Endothelial cell of umbilical vein (primary cell): ENCODE measurements at regions of chr7 and their contacts with region 1.

Region 1: DNA sequence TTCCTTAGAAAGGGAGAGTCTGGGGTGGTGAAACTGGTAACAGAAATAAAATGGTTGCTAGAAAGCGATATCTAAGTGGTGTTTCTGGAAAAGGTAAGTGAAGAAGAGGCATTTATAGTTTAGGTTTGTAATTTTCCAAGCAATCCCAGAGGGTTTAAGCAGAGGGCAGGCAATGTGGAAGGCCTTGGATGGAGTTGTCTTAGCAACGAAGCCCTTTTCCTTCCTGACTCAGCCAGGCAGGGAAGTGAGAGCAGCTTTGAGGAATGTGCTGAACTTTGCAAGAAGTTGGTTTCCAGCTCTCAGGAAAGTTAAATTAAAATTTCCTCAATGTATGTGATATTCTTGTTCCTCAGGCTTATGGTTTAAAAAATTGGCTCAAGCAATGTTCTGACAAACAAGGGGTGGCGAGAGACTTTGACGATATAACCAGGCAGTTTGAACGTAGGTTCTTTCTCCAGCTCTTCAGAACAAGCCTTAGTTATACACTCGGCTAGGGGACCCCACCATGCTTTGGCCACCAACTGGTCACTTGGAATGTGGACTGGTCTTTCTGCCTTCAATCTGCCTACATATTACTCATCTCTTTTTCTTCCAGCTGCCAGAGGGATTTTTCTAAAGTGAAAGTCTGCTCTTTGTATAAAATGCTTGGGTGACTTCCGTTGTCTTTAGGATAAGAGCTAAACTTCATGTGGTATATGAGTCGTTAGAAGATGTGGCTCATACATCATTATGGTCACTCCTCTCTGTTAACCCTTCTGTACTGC is 66.9 kb upstream of the SLC25A13 start:
- DNase-seq: peak; percentile 89
- H3K4me3 ChIP-seq: peak overlapping the region in 1 of 3 experiments; percentile 38
- H3K27ac ChIP-seq: peak overlapping the region; percentile 97
- H3K4me1 ChIP-seq: peaks cover 26% of the 10 kb centered on the region
- H3K27me3 ChIP-seq: no peaks in the 10 kb centered on the region
- CTCF ChIP-seq: no peak
- POLR2A ChIP-seq: peak; percentile 18

Region 2: GRCh38 chr7:96084881-96085551 is 303.8 kb before region 1 on chr7:
- CTCF ChIA-PET with region 1: interaction called, 5 read pairs
- POLR2A ChIA-PET with region 1: no interaction called
- dilution Hi-C with region 1: no loop called
- intact Hi-C with region 1: loop called (anchors 1 kb)
- DNase-seq: peak; percentile 72
- H3K4me3 ChIP-seq: no peak overlapping the region
- H3K27ac ChIP-seq: peak overlapping the region; percentile 57
- H3K4me1 ChIP-seq: peaks cover 31% of the 10 kb centered on the region
- H3K27me3 ChIP-seq: no peaks in the 10 kb centered on the region
- CTCF ChIP-seq: no peak
- POLR2A ChIP-seq: no peak

Region 3: DNA sequence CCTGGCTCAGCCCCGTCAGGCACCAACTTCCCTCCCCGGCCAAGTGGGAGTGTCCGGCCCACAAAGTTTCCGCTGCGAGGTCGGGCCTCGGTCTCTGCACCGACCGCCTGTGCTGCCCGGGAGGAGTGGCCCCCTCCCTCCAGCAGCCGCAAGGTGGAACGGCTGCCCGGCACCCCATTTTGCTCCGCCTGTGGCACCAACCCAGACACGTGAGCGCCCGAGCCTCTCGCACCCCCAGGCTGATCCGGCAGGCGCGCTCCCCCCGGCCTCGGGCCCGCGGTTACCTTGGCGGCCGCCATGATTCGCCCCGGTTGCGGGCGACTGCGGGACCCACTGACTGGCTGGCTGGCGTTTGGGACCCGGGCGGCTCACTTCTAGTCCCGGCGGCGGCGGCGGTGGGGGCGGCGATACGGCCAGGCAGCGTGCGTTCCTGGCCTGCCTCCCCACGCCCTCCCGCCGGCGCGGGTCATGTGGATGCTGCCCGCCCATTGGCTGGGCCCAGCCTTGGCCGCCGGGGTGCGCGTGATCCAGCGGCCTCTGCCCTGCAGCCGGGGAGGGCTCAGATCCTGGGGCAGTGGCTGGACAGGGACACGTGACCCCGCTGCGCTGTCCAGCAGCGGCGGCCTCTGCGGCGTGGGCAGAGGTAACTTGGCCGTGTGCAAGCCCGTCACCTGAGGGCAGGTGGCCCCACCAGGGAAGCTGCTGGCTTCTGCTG is 67.0 kb before region 1 on chr7 and contains the start of gene SLC25A13:
- CTCF ChIA-PET with region 1: no interaction called
- POLR2A ChIA-PET with region 1: no interaction called
- dilution Hi-C with region 1: no loop called
- intact Hi-C with region 1: loop called (anchors 1 kb)
- DNase-seq: peak; percentile 81
- H3K4me3 ChIP-seq: peak within 1 kb of the TSS; percentile 71 to 90 (median 86)
- H3K27ac ChIP-seq: peak within 1 kb of the TSS; percentile 85
- H3K4me1 ChIP-seq: peaks cover 14% of the 10 kb centered on the region
- H3K27me3 ChIP-seq: no peaks in the 10 kb centered on the region
- CTCF ChIP-seq: no peak
- POLR2A ChIP-seq: peak; percentile 74
- total RNA-seq, gene SLC25A13: 34.4 and 36.1 TPM in 2 replicates

Region 4: GRCh38 chr7:96657347-96658021 is 268.7 kb after region 1 on chr7:
- CTCF ChIA-PET with region 1: no interaction called
- POLR2A ChIA-PET with region 1: no interaction called
- dilution Hi-C with region 1: no loop called
- intact Hi-C with region 1: loop called (anchors 1 kb)
- DNase-seq: peak; percentile 41
- H3K4me3 ChIP-seq: no peak overlapping the region
- H3K27ac ChIP-seq: peak overlapping the region; percentile 25
- H3K4me1 ChIP-seq: peaks cover 21% of the 10 kb centered on the region
- H3K27me3 ChIP-seq: no peaks in the 10 kb centered on the region
- CTCF ChIP-seq: no peak
- POLR2A ChIP-seq: no peak

Region 5: GRCh38 chr7:96701258-96701657 is 312.5 kb after region 1 on chr7:
- CTCF ChIA-PET with region 1: no interaction called
- POLR2A ChIA-PET with region 1: no interaction called
- dilution Hi-C with region 1: no loop called
- intact Hi-C with region 1: loop called (anchors 2 kb)
- DNase-seq: no peak
- H3K4me3 ChIP-seq: no peak overlapping the region
- H3K27ac ChIP-seq: no peak overlapping the region
- H3K4me1 ChIP-seq: peaks cover 7% of the 10 kb centered on the region
- H3K27me3 ChIP-seq: no peaks in the 10 kb centered on the region
- CTCF ChIP-seq: no peak
- POLR2A ChIP-seq: no peak